Left colon (tissue), 2 donors: ENCODE measurements at regions of chr5 and their contacts with region 1.

Region 1: GRCh38 chr5:171913987-171914273 is 92.5 kb downstream of the FBXW11 start:
- DNase-seq: no peak
- ATAC-seq: no peak

Region 2: DNA sequence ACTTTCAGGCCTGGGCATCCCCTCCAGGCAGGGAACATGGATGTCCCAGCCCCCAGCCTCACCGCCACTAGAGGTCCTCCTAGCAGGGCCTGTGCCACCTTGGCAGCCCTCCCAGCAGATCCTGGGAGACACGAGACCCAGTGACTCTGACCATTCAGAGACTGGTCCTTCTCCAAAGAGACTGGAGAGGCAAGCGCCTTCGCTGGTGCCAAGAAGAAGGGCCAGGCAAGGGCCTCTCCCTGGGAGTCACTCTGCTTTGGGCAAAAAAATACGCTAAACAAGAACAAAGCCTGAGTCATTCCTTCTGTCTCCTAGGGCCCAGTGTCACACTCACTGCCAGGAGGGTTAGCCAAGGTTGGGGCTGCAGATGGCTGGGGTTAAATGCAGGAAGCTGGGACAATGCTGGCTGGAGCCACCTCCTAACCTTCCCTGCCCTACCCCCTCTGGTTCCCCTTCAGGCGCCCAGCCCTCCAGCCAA is 163.6 kb before region 1 on chr5:
- intact Hi-C with region 1: no loop called
- DNase-seq: peak in 1 of 2 donors; percentile 26
- ATAC-seq: peak; percentile 29

Region 3: GRCh38 chr5:172035039-172035438 is 121.1 kb after region 1 on chr5:
- intact Hi-C with region 1: loop called (anchors 5 to 10 kb)
- DNase-seq: no peak
- ATAC-seq: peak; percentile 59

Region 4: GRCh38 chr5:172044631-172045314 is 130.8 kb after region 1 on chr5:
- intact Hi-C with region 1: loop called (anchors 5 to 10 kb)
- DNase-seq: no peak
- ATAC-seq: no peak

Region 5: GRCh38 chr5:172194985-172195774 is 281.2 kb after region 1 on chr5:
- intact Hi-C with region 1: loop called in 1 of 2 experiments (anchors 10 kb)
- DNase-seq: no peak
- ATAC-seq: no peak